ENCODE measurements at regions of chr10 and their contacts with region 1.

Region 1: GRCh38 chr10:61923213-61923949 is 21.9 kb downstream of the ARID5B start:
- DNase-seq: no peak
- ATAC-seq: no peak
- H3K4me3 Mint-ChIP-seq: no peak overlapping the region
- H3K27ac Mint-ChIP-seq: peak overlapping the region; percentile 15
- H3K4me1 Mint-ChIP-seq: peaks cover 57% of the 10 kb centered on the region
- H3K27me3 Mint-ChIP-seq: no peaks in the 10 kb centered on the region
- CTCF ChIP-seq: no peak

Region 2: GRCh38 chr10:60914690-60915141 is 1008.7 kb before region 1 on chr10:
- CTCF ChIA-PET with region 1: no interaction called
- POLR2A ChIA-PET with region 1: no interaction called
- intact Hi-C with region 1: no loop called
- DNase-seq: no peak
- ATAC-seq: no peak
- H3K4me3 Mint-ChIP-seq: no peak overlapping the region
- H3K27ac Mint-ChIP-seq: no peak overlapping the region
- H3K4me1 Mint-ChIP-seq: peaks cover 14% of the 10 kb centered on the region
- H3K27me3 Mint-ChIP-seq: peaks cover 5% of the 10 kb centered on the region
- CTCF ChIP-seq: no peak

Region 3: GRCh38 chr10:61912981-61913380 is 10.4 kb before region 1 on chr10:
- CTCF ChIA-PET with region 1: no interaction called
- POLR2A ChIA-PET with region 1: no interaction called
- intact Hi-C with region 1: loop called (anchors 2 kb)
- DNase-seq: no peak
- ATAC-seq: no peak
- H3K4me3 Mint-ChIP-seq: no peak overlapping the region
- H3K27ac Mint-ChIP-seq: no peak overlapping the region
- H3K4me1 Mint-ChIP-seq: peaks cover 59% of the 10 kb centered on the region
- H3K27me3 Mint-ChIP-seq: no peaks in the 10 kb centered on the region
- CTCF ChIP-seq: no peak

Region 4: DNA sequence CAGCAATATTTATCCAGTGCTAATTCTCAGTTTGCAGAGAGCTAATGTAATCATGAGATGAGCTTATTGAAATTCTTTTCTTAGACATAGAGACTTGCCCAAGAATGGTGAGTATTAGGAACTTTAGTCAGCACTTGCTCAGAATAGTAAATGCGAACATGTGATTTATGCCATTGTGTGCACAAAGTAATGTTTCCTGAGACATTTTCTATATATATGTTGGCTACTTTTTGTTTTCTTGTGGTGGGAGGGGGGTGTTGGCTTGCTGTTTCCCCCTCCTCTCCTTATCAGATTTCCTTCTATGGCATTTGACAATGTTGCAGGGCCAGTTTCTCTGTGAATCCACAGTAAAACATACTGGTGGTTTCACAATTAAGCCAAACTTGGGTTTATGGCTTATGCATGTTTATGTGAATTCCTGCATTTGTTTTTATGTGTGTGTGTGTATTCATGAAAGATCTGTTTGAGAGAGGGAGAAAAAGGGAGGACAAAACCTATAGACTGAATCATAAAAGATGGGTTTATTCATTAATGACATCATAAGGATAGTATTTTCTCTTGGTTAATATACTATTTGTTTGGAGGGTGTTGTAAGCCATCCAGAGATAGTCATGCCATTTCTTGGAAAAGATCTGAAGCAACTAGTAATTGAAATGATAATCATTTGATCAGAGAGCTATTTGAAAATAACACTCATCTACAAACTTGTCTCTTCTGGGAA is 14.4 kb after region 1 on chr10:
- CTCF ChIA-PET with region 1: interaction called, 5 read pairs
- POLR2A ChIA-PET with region 1: interaction called, 8 read pairs
- intact Hi-C with region 1: loop called (anchors 1 kb)
- DNase-seq: no peak
- ATAC-seq: no peak
- H3K4me3 Mint-ChIP-seq: no peak overlapping the region
- H3K27ac Mint-ChIP-seq: peak overlapping the region; percentile 84
- H3K4me1 Mint-ChIP-seq: peaks cover 87% of the 10 kb centered on the region
- H3K27me3 Mint-ChIP-seq: no peaks in the 10 kb centered on the region
- CTCF ChIP-seq: no peak

Region 5: GRCh38 chr10:61974601-61975390 is 51.4 kb after region 1 on chr10:
- CTCF ChIA-PET with region 1: no interaction called
- POLR2A ChIA-PET with region 1: no interaction called
- intact Hi-C with region 1: no loop called
- DNase-seq: no peak
- ATAC-seq: no peak
- H3K4me3 Mint-ChIP-seq: peak overlapping the region; percentile 60
- H3K27ac Mint-ChIP-seq: peak overlapping the region; percentile 81
- H3K4me1 Mint-ChIP-seq: peaks cover 84% of the 10 kb centered on the region
- H3K27me3 Mint-ChIP-seq: no peaks in the 10 kb centered on the region
- CTCF ChIP-seq: no peak

Measured in activated B cell treated with CpG ODN at 0.5 μM for 24 hours (primary cell).